Testis (tissue), 5 donors: ENCODE measurements at regions of chr6 and their contacts with region 1.

Region 1: GRCh38 chr6:108541838-108542759 is 18.6 kb upstream of the FOXO3 start:
- DNase-seq: peak; percentile 84
- H3K4me3 ChIP-seq: no peak overlapping the region
- H3K27ac ChIP-seq: no peak overlapping the region
- H3K4me1 ChIP-seq: no peaks in the 10 kb centered on the region
- H3K27me3 ChIP-seq: no peaks in the 10 kb centered on the region
- CTCF ChIP-seq: peak; percentile 67 to 94 (median 89)
- POLR2A ChIP-seq: no peak

Region 2: GRCh38 chr6:108200631-108201030 is 341.5 kb before region 1 on chr6:
- intact Hi-C with region 1: no loop called
- DNase-seq: no peak
- H3K4me3 ChIP-seq: no peak overlapping the region
- H3K27ac ChIP-seq: no peak overlapping the region
- H3K4me1 ChIP-seq: no peaks in the 10 kb centered on the region
- H3K27me3 ChIP-seq: no peaks in the 10 kb centered on the region
- CTCF ChIP-seq: no peak
- POLR2A ChIP-seq: no peak

Region 3: DNA sequence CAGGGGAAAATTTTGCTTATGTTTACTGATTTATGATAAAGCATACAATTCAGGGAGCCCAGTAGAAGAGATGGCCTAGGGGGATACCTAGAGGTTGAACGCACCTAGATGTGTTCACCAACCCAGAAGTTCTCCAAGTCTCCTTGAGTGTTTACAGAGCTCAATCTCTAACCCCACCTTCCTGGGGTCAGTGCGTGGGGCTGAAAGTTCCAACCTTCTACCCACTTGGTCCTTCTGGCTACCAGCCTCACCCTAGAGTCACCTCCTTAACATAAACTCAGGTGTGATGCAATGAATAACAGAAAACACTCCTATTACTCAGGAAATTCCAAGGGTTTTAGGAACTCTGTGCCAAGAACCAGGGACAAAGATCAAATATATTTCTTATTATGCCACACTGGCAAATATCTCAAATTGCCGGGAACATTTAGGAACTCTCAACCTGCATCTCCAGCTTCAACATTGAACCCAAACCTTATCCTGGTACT is 220.8 kb before region 1 on chr6:
- intact Hi-C with region 1: no loop called
- DNase-seq: no peak
- H3K4me3 ChIP-seq: no peak overlapping the region
- H3K27ac ChIP-seq: no peak overlapping the region
- H3K4me1 ChIP-seq: no peaks in the 10 kb centered on the region
- H3K27me3 ChIP-seq: no peaks in the 10 kb centered on the region
- CTCF ChIP-seq: no peak
- POLR2A ChIP-seq: no peak

Region 4: DNA sequence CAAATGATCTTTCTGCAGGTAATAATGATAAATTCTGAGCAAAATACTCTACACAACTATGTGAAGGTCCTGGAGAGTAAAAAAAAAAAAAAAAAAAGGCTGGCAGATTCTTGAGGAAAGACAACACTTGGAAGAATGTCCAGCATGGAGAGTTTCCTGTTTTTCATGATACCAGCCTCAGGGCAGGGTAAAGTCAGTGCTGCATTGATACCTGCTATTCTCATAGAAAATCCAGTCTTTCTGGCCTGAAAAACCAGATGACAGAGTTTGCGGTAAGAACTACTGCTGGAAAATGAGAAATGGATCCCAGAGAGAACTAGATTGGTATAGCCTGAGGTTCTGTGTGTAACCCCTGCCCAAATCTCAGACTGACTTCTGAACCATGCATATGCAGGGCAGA is 158.1 kb before region 1 on chr6:
- intact Hi-C with region 1: no loop called
- DNase-seq: no peak
- H3K4me3 ChIP-seq: no peak overlapping the region
- H3K27ac ChIP-seq: no peak overlapping the region
- H3K4me1 ChIP-seq: no peaks in the 10 kb centered on the region
- H3K27me3 ChIP-seq: no peaks in the 10 kb centered on the region
- CTCF ChIP-seq: no peak
- POLR2A ChIP-seq: no peak

Region 5: GRCh38 chr6:108835218-108835850 is 293.2 kb after region 1 on chr6:
- intact Hi-C with region 1: loop called (anchors 5 kb)
- DNase-seq: peak; percentile 95
- H3K4me3 ChIP-seq: no peak overlapping the region
- H3K27ac ChIP-seq: no peak overlapping the region
- H3K4me1 ChIP-seq: peaks cover 10% of the 10 kb centered on the region
- H3K27me3 ChIP-seq: no peaks in the 10 kb centered on the region
- CTCF ChIP-seq: peak; percentile 85 to 97 (median 95)
- POLR2A ChIP-seq: no peak

Region 6: GRCh38 chr6:108888745-108889144 is 346.6 kb after region 1 on chr6:
- intact Hi-C with region 1: loop called (anchors 5 kb)
- DNase-seq: no peak
- H3K4me3 ChIP-seq: no peak overlapping the region
- H3K27ac ChIP-seq: no peak overlapping the region
- H3K4me1 ChIP-seq: no peaks in the 10 kb centered on the region
- H3K27me3 ChIP-seq: no peaks in the 10 kb centered on the region
- CTCF ChIP-seq: no peak
- POLR2A ChIP-seq: no peak

Region 7: DNA sequence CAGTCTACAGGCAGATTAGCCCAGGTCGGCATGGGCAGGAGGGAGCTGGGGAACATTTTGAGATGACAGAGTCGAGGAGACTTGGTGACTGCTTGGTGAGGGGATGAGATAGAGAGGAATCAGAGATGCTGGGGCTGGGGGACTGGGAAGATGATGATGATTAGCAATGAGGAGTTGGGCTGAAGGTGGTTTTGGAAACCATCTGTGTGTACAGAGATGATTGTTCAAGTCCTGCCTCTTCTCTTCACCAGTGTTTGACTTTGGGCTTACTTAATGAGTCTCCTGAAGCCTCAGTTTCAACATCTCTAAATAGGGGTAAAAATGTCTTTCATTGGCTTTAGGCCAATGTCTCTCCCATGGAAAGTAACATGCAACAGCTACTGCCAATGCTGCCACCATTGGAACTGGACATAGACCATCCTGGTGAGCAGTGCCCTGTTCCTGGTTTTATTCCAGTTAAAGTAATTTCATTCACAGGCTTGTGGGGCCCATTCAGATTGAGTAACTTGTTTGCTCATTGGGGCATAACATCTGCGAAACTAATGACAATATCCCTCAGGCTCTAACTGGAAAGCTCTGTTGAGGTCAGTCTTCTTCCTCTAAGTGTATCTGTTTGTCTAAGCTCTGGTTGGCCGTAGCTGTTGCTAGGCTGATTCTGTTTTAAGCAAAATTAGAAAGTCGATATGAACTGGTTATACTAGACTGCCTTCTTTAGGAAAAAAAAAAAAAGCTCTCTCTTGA is 405.2 kb after region 1 on chr6:
- intact Hi-C with region 1: loop called (anchors 5 kb)
- DNase-seq: peak; percentile 34
- H3K4me3 ChIP-seq: no peak overlapping the region
- H3K27ac ChIP-seq: peak overlapping the region; percentile 84 to 88
- H3K4me1 ChIP-seq: peaks cover 55% of the 10 kb centered on the region
- H3K27me3 ChIP-seq: no peaks in the 10 kb centered on the region
- CTCF ChIP-seq: no peak
- POLR2A ChIP-seq: no peak

Region 8: GRCh38 chr6:109073344-109074132 is 531.4 kb after region 1 on chr6:
- intact Hi-C with region 1: loop called (anchors 5 kb)
- DNase-seq: peak; percentile 57
- H3K4me3 ChIP-seq: no peak overlapping the region
- H3K27ac ChIP-seq: no peak overlapping the region
- H3K4me1 ChIP-seq: no peaks in the 10 kb centered on the region
- H3K27me3 ChIP-seq: no peaks in the 10 kb centered on the region
- CTCF ChIP-seq: peak; percentile 46 to 68 (median 57)
- POLR2A ChIP-seq: no peak